ENCODE measurements at regions of chr17 and their contacts with region 1.

Region 1: DNA sequence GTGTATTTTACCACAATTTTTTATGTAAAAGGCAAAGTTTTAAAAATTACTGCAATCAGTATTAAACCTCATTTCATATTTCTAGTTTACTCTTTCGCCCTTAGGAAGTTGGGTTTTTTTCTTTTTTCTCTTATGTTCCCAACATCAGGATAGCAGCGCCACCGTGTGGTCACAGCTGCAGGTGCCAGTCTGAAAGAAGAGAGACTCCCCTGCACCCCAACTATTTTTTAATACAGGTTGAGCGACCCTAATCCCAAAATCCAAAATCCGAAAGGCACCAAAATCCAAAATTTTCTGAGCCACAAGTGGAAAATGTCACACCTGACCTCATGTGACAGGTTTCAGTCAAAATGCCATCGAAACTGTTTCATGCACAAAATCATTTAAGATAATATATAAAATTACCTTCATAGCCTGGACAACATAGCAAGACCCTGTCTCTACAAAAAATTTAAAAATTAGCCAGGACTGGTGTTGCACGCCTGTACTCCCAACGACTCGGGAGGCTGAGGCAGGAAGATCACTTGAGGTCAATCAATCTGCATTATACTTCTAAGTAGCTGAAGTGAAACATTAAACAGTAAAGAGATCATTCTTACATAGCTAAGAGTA is 21.8 kb upstream of the ASGR2 start:
- DNase-seq: peak; percentile 67 to 85
- ATAC-seq: peak in 2 of 4 donors; percentile 47 to 62
- H3K4me3 ChIP-seq: no peak overlapping the region
- H3K27ac ChIP-seq: no peak overlapping the region
- H3K4me1 ChIP-seq: no peaks in the 10 kb centered on the region
- H3K27me3 ChIP-seq: peaks cover 0 to 65% (median 5%) of the 10 kb centered on the region in 3 donors
- CTCF ChIP-seq: peak; percentile 91

Region 2: GRCh38 chr17:7045909-7046724 is 90.3 kb before region 1 on chr17:
- intact Hi-C with region 1: loop called in 1 of 2 experiments (anchors 2 kb)
- DNase-seq: no peak
- ATAC-seq: peak in 3 of 4 donors; percentile 22 to 72 (median 46)
- H3K4me3 ChIP-seq: peak overlapping the region; percentile 57
- H3K27ac ChIP-seq: no peak overlapping the region
- H3K4me1 ChIP-seq: peaks cover 21% of the 10 kb centered on the region
- H3K27me3 ChIP-seq: peaks cover 0 to 29% (median 10%) of the 10 kb centered on the region in 3 donors
- CTCF ChIP-seq: peak; percentile 81

Region 3: GRCh38 chr17:7056386-7056785 is 80.0 kb before region 1 on chr17:
- intact Hi-C with region 1: loop called (anchors 1 to 2 kb)
- DNase-seq: no peak
- ATAC-seq: no peak
- H3K4me3 ChIP-seq: no peak overlapping the region
- H3K27ac ChIP-seq: no peak overlapping the region
- H3K4me1 ChIP-seq: no peaks in the 10 kb centered on the region
- H3K27me3 ChIP-seq: peaks cover 0 to 8% (median 0%) of the 10 kb centered on the region in 3 donors
- CTCF ChIP-seq: no peak